ENCODE measurements at regions of chr3 and their contacts with region 1.

Region 1: DNA sequence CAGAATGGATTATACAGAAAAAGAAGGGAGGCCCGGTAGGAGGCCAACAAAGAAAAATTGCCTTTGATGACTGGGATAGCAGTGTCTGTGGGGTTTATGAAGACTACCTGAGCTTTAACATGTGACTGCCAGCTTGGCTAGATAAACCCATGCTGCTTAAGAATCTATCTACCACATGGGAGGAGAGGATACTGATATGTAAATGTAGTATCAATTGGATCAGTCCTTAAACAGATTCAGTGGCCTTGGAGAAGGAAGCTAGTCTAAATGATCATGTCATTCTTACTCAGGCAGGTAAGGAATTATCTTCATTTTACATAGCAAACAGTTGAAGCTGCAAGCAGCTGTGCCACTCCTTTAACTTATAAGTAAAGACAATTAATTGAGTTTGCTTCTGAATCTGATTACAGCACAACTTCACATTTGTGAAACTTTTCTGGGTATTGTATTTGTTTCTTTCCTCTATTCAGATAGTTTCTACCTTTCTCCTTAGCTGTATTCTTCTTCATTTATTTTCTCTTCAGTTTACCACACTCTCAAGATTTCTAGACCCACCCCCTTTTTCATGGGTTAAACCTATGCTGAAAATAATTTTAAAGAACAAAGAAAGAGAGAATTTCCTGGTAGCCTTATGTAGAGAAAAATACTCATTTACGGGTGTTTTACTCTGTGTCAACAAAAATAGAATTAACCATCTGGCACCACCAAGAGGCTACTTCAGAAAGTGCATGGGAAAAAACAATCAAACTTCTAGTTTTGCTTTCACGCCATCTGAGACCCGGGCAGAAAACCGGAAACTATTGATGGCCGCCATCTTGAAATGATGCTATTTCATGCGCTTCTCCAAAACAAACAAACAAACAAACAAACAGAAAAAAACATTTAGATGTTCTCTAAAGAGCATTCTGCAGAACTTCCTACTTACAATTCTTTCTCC is 49.8 kb upstream of the SYNPR start:
- DNase-seq: peak in 1 of 2 donors; percentile 5
- ATAC-seq: peak in 1 of 8 donors; percentile 47
- H3K4me3 ChIP-seq: peak overlapping the region in 1 of 10 donors; percentile 18
- H3K27ac ChIP-seq: no peak overlapping the region
- H3K4me1 ChIP-seq: no peaks in the 10 kb centered on the region
- H3K27me3 ChIP-seq: no peaks in the 10 kb centered on the region
- CTCF ChIP-seq: peak in 8 of 9 donors; percentile 32 to 65 (median 52)

Region 2: DNA sequence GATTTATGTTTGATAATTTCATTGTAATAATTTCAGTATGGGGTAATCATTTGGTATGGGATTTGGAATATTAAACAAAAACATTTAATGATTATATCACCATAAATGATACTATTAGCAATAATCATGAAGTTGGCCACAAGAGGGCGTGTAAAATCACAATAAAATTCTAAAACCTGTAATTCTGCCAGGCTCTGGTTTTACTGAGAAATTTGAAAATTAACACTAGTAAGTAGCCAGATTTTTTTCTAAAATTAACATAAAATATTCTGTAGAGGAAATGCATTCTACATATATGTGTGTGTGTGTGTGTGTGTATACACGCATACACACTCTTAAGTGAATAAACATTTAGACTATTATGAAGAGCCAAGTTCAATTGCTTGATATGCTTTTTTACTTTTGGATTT is 895.5 kb before region 1 on chr3:
- intact Hi-C with region 1: loop called in 2 of 10 experiments (anchors 10 kb)
- DNase-seq: no peak
- ATAC-seq: no peak
- H3K4me3 ChIP-seq: no peak overlapping the region
- H3K27ac ChIP-seq: no peak overlapping the region
- H3K4me1 ChIP-seq: no peaks in the 10 kb centered on the region
- H3K27me3 ChIP-seq: no peaks in the 10 kb centered on the region
- CTCF ChIP-seq: peak in 8 of 9 donors; percentile 26 to 68 (median 56)

Region 3: GRCh38 chr3:63349583-63350521 is 121.5 kb after region 1 on chr3:
- intact Hi-C with region 1: no loop called
- DNase-seq: peak in 1 of 2 donors; percentile 14
- ATAC-seq: peak in 1 of 8 donors; percentile 49
- H3K4me3 ChIP-seq: no peak overlapping the region
- H3K27ac ChIP-seq: no peak overlapping the region
- H3K4me1 ChIP-seq: peaks cover 0 to 3% (median 0%) of the 10 kb centered on the region in 9 donors
- H3K27me3 ChIP-seq: peaks cover 0 to 45% (median 22%) of the 10 kb centered on the region in 7 donors
- CTCF ChIP-seq: peak; percentile 34 to 80 (median 72)

Region 4: GRCh38 chr3:63624941-63625560 is 396.7 kb after region 1 on chr3:
- intact Hi-C with region 1: no loop called
- DNase-seq: no peak
- ATAC-seq: peak in 4 of 8 donors; percentile 51 to 68 (median 62)
- H3K4me3 ChIP-seq: no peak overlapping the region
- H3K27ac ChIP-seq: no peak overlapping the region
- H3K4me1 ChIP-seq: peaks cover 0 to 11% (median 0%) of the 10 kb centered on the region in 9 donors
- H3K27me3 ChIP-seq: no peaks in the 10 kb centered on the region
- CTCF ChIP-seq: no peak

Measured in heart right ventricle (tissue), 16 donors.